ENCODE measurements at regions of chr11 and their contacts with region 1.

Region 1: GRCh38 chr11:72040726-72041441 is 39.5 kb downstream of the NUMA1 start:
- DNase-seq: peak; percentile 95

Region 2: DNA sequence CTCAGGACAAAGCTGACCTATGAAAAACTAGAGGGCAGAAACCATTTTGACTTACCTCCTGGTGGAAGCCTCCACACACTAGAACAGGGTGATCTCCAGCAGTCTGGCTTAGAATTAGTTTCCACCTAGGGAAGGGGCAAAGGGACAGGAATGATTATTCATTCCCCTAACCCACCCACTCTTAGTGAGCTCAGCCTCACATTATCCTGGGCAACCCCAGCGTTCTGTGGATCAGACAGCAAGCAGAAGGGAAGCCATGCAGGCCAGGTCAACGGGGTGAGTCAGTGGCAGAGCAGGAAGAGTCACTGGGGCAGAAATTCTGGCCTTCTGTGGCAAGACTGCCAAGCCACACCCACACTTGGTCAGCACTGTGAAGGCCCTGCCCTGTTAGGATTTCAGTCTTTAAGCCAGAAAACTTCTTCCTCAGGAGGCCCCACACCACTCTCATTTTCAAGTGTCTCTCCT is 28.9 kb after region 1 on chr11:
- intact Hi-C with region 1: loop called (anchors 1 kb)
- DNase-seq: peak; percentile 93

Region 3: GRCh38 chr11:72080256-72080974 is 39.5 kb after region 1 on chr11 and contains the starts of genes LRRC51 and NUMA1:
- intact Hi-C with region 1: loop called (anchors 1 kb)
- DNase-seq: peak; percentile 100
- total RNA-seq, gene LRRC51: 4.2 TPM
- total RNA-seq, gene NUMA1: 86.0 TPM

Region 4: GRCh38 chr11:72102946-72103753 is 62.3 kb after region 1 on chr11 and contains the start of gene LAMTOR1:
- intact Hi-C with region 1: loop called (anchors 2 kb)
- DNase-seq: peak; percentile 99
- total RNA-seq, gene LAMTOR1: 79.3 TPM

Region 5: DNA sequence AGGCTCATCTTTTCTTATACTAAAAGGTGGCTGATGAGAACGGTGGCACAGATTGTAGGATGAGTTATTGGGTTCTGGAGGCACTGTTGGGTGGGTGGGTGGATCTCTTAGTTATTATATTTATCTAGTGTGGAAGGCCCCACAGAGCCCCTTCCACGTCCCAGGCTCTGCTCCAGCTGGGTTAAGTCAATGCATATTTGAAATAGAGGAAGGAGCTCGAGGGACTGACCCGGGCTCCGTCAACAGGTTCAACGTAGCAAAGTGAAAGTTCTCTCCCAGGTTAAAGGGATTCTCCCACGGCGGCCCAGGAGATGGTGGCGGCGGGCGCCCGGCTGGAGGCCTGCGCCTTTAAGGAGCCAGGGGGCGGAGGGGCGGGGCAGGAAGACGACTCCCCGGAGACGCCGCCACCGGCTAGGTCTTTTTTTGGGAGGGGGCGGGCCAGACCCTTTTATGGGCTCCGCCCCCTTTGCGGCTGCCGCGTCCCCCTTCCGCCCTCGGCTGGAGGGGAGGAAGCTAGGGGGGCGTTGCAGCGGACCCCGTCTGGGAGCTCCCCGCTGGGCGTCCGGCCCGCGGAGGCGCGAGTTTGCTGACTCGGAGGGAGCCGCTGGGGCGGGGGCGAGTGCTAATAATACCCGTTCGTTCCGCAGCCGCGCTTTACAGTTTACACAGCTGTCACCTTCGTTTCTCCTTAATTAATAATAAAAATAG is 182.2 kb after region 1 on chr11:
- intact Hi-C with region 1: loop called (anchors 5 kb)
- DNase-seq: peak; percentile 97

Region 6: DNA sequence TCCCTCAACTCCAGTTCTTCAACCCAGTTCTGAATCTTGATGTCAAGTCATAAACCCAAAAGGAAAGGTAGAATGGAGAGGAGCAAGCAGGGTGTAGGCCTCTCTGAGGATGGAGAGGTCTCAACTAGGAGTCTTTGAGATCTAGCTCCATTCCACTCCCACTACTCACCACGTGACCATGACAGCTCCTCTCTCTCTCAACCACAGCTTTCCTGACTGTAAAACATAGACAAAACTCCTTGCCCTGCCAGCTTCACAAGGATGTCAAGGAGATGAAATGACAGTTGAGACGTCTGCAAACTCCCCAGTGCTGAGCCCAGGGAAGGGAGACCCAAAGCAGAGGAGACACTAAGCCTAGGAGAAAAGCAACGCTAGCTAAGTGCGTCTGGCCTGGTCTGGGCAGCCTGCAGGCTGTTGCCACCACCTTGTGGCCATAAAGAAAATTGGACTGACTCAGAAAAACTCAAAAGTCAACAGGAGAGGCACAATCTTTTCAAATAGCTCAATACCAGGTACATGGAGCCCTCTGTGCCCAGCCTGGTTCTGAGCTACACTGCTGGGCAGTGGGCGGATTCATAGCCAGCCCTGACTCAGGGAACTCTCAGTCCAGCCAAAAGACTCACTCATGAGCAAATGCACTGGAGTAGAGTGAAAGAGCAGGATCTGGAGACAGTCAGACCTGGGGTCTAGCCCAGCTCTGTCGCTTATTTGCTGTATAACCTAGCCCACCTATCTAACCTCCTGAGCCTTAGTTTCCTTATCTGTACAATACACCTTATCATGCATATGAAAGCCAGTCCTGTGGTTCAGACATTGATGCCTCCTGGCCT is 390.1 kb after region 1 on chr11:
- intact Hi-C with region 1: no loop called
- DNase-seq: no peak